OCI-LY7 (cell line): ENCODE measurements at regions of chr22 and their contacts with region 1.

Region 1: DNA sequence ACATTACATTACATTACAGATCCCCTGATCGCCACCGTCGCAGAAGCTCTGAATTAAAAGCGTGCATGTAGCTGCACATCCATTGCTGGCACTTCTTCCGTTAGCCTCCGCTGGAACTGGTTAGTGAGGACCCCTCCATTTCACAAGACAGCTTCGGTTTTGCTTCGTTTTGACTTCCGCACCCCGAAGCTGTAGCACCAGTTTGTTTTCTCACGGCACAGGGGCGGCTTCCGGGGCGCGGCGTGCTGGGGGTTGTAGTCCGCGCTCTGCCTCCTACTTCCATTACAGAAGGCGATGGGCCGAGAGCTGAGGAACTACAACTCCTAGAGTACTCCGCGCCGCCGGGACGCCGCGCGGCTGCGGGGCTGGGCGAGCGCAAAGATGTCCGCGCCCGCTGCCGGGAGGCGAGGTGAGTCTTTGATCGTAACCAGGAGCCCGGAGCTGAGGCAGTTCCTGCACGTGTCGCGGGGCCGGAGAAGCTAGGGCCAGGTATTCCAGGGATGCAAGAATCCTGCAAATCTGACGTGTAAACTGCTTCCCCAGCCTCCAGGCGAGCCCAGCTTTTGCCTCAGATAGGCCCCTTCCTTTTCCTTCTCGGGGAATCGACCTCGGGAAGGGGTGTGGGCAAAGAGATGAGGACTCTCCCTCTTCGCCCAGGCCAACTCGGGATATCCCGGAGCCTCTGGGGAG is at the start of gene PEX26:
- DNase-seq: peak; percentile 97
- H3K4me3 ChIP-seq: peak within 1 kb of the TSS; percentile 87
- H3K27ac ChIP-seq: peak within 1 kb of the TSS; percentile 76
- H3K4me1 ChIP-seq: peaks cover 56% of the 10 kb centered on the region
- CTCF ChIP-seq: no peak
- total RNA-seq, gene PEX26: 17.6 and 22.4 TPM in 2 replicates

Region 2: DNA sequence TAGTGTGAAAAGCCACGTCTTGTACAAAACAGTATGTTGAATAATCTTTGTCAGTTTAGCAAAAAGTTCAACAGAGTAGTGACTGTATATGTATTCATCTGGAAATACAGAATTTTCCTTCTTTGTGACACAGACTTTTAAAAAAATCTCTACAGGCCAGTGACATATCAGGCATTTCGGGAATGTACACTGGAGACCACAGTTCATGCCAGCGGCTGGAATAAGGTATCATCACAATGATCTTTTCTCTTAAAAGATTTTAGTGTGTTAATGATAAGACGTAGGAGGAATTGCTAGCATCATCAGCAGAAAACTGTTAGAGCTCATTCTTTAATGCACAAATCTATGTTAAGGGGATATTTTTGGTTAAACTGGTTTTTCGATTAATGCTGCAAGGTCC is 381.8 kb before region 1 on chr22:
- CTCF ChIA-PET with region 1: no interaction called
- POLR2A ChIA-PET with region 1: no interaction called
- intact Hi-C with region 1: no loop called
- DNase-seq: no peak
- H3K4me3 ChIP-seq: no peak overlapping the region
- H3K27ac ChIP-seq: no peak overlapping the region
- H3K4me1 ChIP-seq: no peaks in the 10 kb centered on the region
- CTCF ChIP-seq: no peak

Region 3: GRCh38 chr22:17742527-17742902 is 335.3 kb before region 1 on chr22:
- CTCF ChIA-PET with region 1: no interaction called
- POLR2A ChIA-PET with region 1: interaction called, 3 read pairs
- intact Hi-C with region 1: loop called (anchors 1 kb)
- DNase-seq: peak; percentile 87
- H3K4me3 ChIP-seq: no peak overlapping the region
- H3K27ac ChIP-seq: no peak overlapping the region
- H3K4me1 ChIP-seq: peaks cover 15% of the 10 kb centered on the region
- CTCF ChIP-seq: peak; percentile 81

Region 4: GRCh38 chr22:17876306-17876831 is 201.4 kb before region 1 on chr22:
- CTCF ChIA-PET with region 1: no interaction called
- POLR2A ChIA-PET with region 1: no interaction called
- intact Hi-C with region 1: loop called (anchors 2 kb)
- DNase-seq: peak; percentile 54
- H3K4me3 ChIP-seq: no peak overlapping the region
- H3K27ac ChIP-seq: no peak overlapping the region
- H3K4me1 ChIP-seq: no peaks in the 10 kb centered on the region
- CTCF ChIP-seq: 0 out of 2 replicates have a peak, but pooled peaks have one; percentile 43

Region 5: DNA sequence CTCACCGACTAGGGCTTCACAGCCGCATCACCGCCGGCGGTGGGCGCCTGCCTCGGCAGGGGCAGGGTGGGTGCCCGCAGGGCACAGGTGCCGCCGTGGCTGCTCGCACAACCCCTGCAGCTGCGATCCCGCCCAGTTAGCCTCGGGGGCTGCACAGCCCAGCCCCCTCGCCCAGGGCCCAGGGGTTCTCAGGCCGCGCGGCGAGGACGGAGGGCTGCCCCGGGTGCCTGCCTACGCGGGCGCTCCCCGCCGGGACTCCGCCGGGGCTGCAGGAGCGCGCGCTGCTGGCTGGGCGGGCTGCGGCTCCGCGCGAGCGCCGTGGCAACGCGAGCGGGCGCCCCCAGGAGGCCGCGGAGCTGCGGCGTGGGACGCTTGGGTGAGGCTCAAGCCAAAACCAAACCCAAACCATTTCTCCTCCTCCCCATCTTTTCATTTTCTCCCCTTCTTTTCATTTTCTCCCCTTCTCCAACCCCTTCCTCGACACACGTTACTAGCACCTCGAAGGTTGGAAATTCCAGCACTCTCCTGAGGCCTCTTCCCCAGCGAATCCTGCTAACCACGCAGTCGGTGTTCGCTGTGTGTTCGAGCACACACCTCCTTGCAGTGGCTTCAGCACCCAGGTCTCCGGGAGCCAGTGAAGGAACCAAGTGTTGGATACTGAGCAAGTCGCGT is 53.4 kb before region 1 on chr22 and contains the start of gene MICAL3:
- CTCF ChIA-PET with region 1: interaction called, 7 read pairs
- POLR2A ChIA-PET with region 1: interaction called, 9 read pairs
- intact Hi-C with region 1: loop called (anchors 2 kb)
- DNase-seq: peak; percentile 88
- H3K4me3 ChIP-seq: peak within 1 kb of the TSS; percentile 68
- H3K27ac ChIP-seq: peak within 1 kb of the TSS; percentile 57
- H3K4me1 ChIP-seq: peaks cover 60% of the 10 kb centered on the region
- CTCF ChIP-seq: peak; percentile 76
- total RNA-seq, gene MICAL3: 80.9 and 93.2 TPM in 2 replicates